ENCODE measurements at regions of chr2 and their contacts with region 1.

Region 1: DNA sequence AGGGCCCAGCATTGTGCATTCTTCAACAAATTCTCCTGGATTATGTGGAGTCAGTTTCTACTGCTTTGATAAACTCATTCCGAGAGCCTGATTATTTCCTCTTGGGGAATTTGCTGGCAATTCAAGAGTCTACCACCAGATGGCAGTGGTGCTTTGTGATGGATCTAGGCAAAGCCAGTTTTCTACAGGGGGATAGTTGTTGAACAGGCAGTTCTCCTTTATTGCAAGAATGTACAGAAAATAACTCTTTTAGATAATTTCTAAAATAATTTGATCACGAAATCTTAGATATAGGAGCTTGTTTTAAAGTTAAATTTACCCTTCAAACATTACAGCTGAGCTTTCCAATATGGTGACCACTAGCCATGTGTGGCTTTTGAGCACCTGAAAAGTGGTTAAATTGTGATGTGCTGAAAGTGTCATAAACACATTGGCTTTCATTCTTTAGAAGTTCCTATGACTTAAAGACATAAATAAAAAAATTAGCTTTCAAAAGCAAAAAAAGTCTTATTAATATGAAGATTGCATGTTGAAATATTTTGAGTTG is 66.7 kb upstream of the HAAO start:
- DNase-seq: peak in 2 of 5 donors; percentile 57 to 58
- ATAC-seq: peak in 1 of 4 donors; percentile 20
- H3K4me3 ChIP-seq: no peak overlapping the region
- H3K27ac ChIP-seq: peak overlapping the region in 4 of 12 donors; percentile 7 to 52 (median 31)
- H3K4me1 ChIP-seq: peaks cover 0 to 14% (median 7%) of the 10 kb centered on the region in 12 donors
- H3K27me3 ChIP-seq: no peaks in the 10 kb centered on the region
- CTCF ChIP-seq: peak; percentile 75 to 93 (median 87)
- POLR2A ChIP-seq: no peak

Region 2: DNA sequence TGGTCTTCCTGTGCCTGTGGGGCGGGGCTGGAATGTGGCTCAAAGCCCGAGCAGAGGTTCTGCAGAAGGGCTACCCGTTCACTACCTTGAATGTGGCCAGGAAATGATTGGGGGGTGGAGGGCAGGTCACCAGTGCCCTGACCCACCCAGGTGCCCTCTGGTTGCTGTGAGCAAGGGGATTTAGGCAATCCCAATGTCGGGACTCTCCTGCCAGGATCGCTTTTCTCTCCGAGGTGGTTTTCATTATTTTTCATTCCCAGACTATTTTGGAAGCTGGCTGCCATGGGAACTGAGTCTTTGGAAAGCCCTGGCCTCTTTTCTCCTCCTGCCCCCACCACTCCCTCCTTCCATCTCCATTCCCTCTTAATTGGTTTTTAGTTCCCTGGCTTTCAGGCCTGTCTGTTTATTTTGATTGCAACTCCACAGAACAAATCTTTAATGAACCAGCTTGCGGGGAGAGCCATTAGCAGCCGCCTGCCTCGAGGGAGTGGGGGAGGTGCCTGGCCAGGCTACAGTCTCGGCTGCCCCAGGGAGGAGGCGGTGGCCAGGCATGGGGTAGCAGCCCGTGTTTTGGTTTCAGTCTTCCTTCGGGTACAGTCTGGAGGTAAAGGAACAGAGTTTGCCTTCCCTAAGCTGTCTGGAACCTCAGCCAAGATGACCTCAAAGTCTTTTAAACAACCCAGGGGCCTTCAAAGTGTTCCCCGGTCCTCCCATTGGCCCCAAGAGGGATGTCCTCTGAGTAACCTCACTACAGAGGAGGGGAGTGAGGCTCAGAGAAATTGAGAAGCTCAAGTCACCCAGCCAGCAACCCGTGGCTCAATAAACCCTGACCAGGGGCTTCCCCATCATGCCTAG is 47.7 kb after region 1 on chr2:
- intact Hi-C with region 1: loop called in 2 of 10 experiments (anchors 1 to 2 kb)
- DNase-seq: peak; percentile 55 to 81 (median 65)
- ATAC-seq: peak; percentile 52 to 72 (median 71)
- H3K4me3 ChIP-seq: peak overlapping the region in 5 of 12 donors; percentile 9 to 31 (median 14)
- H3K27ac ChIP-seq: peak overlapping the region; percentile 57 to 90 (median 76)
- H3K4me1 ChIP-seq: peaks cover 5 to 73% (median 53%) of the 10 kb centered on the region in 12 donors
- H3K27me3 ChIP-seq: no peaks in the 10 kb centered on the region
- CTCF ChIP-seq: no peak
- POLR2A ChIP-seq: no peak

Region 3: DNA sequence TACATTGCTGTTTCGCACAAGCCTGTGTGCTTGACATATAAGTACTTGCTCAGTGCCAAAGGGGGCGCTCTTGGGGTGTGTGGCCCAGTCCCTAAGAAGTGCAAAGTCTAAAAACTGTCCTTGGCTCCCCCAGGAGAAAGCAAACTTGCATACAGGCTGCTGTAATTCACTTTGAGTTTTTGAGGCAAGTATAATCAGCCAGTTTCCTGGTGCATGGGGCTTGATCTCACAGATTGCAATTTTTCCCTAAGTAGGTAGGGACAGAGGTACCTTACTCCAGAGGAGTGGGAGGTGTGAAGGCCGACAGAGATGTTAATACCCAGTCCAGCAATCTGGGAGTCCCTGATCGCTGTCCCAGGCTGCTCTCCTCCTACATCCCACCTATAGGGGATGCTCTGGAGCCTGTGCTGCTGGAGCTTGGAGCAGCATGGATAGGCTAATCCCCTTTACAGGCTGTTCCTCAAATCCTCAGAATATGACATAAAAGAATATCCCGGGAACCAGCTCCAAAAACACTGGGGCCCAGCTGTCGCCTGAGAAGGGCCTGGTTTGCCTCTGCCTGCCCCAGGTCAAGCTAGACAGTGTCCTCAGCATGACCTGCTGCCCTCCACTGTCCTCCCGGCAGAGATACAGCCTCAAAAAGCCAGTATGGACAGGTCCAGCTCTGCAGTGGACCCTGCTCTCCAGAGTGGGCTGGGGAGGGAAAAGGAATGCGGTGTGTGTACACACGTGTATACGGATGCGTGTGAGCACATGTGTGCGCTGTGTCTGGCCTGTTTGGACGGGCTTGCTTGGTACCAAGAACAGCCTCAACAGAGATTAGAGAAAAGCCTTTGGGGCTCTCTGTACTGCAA is 69.8 kb after region 1 on chr2:
- intact Hi-C with region 1: loop called in 4 of 10 experiments (anchors 5 to 10 kb)
- DNase-seq: peak in 1 of 5 donors; percentile 55
- ATAC-seq: peak in 1 of 4 donors; percentile 8
- H3K4me3 ChIP-seq: no peak overlapping the region
- H3K27ac ChIP-seq: peak overlapping the region; percentile 74 to 98 (median 88)
- H3K4me1 ChIP-seq: peaks cover 33 to 100% (median 96%) of the 10 kb centered on the region in 12 donors
- H3K27me3 ChIP-seq: no peaks in the 10 kb centered on the region
- CTCF ChIP-seq: peak in 7 of 12 donors; percentile 22 to 54 (median 40)
- POLR2A ChIP-seq: no peak

Region 4: DNA sequence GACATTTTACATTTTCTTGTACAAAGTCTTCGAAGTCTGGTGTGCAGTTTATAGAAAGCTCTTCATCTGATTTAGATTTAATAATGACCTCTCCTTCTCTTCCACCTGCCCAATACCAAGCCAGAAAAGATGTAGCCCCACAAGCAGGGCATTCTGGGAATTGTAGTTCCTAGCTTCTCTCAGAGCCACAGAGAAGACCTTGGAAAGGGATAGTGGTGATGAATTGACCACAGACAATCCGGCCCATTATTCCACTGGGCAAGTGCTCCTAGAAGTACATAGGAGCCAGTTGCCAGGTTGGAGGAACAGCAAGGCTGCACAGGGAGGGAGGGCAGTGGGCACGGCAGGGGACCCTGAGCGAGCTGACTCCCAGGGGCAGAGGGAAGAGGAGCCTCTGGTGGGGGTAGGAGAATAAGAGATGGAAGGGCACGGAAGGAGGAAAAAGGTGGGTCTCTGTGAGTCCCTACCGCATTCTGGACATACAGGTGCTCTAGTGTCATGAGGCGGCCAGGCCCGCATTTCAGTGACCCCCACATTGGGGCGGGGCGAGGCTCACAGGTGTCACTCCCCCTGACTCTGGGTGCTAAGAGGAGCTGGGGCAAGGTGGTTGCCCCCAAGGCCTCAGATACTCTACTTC is 85.8 kb after region 1 on chr2:
- intact Hi-C with region 1: loop called in 4 of 10 experiments (anchors 5 kb)
- DNase-seq: no peak
- ATAC-seq: no peak
- H3K4me3 ChIP-seq: no peak overlapping the region
- H3K27ac ChIP-seq: peak overlapping the region in 1 of 12 donors; percentile 6
- H3K4me1 ChIP-seq: peaks cover 0 to 32% (median 16%) of the 10 kb centered on the region in 12 donors
- H3K27me3 ChIP-seq: no peaks in the 10 kb centered on the region
- CTCF ChIP-seq: no peak
- POLR2A ChIP-seq: no peak

Region 5: DNA sequence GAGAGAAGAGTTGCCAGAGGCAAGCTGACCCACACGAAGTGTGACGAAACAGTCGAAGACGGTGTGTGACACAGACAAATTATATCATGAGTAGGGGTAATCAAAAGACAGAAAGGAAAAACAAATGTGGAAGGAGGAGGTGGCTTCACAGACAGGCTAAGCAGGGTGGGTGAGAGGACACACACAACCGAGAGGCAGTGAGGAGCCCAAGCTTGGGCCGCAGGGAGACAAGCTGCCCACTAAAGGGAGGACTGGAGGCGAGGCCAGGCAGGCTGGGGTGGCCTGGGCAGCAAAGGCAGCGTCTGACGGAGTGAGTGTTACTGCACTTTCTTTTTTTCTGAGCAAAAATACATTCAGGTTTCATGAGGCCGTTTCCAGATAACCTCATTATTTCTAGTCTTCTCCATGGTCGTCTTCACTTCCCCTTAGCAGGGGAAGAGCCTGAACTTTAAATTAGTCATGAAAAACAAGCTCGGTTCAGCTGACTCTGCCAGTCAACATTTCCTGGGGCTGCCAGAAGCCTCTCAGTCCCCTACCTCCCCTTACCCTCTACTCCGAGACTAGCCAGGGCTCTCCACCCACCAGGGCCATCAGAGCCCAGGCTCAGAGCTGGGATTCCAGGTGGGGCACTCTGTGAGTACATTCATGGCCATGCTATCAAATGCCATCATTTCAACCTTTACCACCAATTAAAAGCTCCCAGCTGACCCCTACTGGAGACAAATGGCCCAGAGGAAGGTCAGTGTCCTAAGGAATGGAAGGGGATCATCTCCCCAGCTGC is 381.1 kb after region 1 on chr2:
- intact Hi-C with region 1: loop called in 1 of 10 experiments (anchors 10 kb)
- DNase-seq: no peak
- ATAC-seq: peak; percentile 7 to 58 (median 28)
- H3K4me3 ChIP-seq: no peak overlapping the region
- H3K27ac ChIP-seq: peak overlapping the region in 7 of 12 donors; percentile 27 to 95 (median 54)
- H3K4me1 ChIP-seq: peaks cover 0 to 62% (median 1%) of the 10 kb centered on the region in 12 donors
- H3K27me3 ChIP-seq: no peaks in the 10 kb centered on the region
- CTCF ChIP-seq: peak in 3 of 12 donors; percentile 5 to 23 (median 6)
- POLR2A ChIP-seq: no peak

Region 6: GRCh38 chr2:43331422-43331821 is 472.3 kb after region 1 on chr2:
- intact Hi-C with region 1: no loop called
- DNase-seq: peak in 3 of 5 donors; percentile 46 to 63 (median 49)
- ATAC-seq: peak; percentile 61 to 82 (median 76)
- H3K4me3 ChIP-seq: no peak overlapping the region
- H3K27ac ChIP-seq: peak overlapping the region in 11 of 12 donors; percentile 79 to 94 (median 85)
- H3K4me1 ChIP-seq: peaks cover 13 to 83% (median 63%) of the 10 kb centered on the region in 12 donors
- H3K27me3 ChIP-seq: no peaks in the 10 kb centered on the region
- CTCF ChIP-seq: no peak
- POLR2A ChIP-seq: no peak